ENCODE measurements at regions of chr15 and their contacts with region 1.

Region 1: GRCh38 chr15:29348336-29348914 is 78.8 kb upstream of the NSMCE3 start:
- DNase-seq: peak; percentile 37
- ATAC-seq: peak in 1 of 2 donors; percentile 72

Region 2: DNA sequence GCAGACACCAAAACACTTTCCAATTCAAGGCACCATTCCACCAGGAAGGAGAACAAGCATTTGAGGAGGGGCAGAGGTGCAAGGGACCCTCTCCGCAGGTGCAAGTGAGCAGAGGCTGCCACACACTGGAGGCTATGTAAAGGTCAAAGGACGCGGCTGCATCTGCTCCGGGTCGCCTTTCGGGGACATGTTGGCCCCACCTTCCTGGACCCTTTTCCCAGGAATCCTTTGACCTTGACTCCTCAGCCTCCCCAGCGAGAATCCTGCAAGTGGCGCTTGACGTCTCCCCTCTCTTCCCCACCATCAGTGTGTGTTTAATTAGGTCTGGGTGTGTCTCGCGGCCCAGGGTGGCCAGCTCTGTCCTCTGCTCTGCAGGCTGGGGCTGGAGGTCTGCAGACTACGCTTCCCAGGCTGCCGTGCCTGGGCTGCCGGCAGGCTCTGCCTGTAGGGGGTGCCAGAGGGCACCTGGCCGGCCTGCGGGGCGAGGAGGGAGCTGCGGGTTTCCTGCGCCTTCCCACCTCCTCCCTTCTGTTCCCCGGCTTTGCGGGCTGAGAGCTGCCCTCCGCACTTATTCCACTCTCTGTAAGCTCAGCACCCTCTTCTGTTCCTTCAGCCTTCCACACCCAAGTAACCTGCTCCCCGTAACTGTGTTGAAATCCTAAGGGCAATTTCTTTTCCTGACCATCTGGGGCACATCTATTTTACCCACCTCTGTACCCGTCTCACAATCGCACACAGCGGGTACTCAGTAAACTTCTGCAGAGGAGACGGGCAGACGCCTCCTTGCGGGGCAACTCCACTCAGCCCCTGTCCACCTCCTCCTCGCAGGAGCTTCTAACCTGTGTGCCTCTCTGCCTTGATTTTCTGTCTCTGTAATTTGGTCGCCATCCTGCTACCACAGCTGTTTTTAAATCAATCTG is 208.6 kb before region 1 on chr15:
- intact Hi-C with region 1: loop called in 1 of 2 experiments (anchors 10 kb)
- DNase-seq: peak; percentile 43
- ATAC-seq: peak; percentile 78 to 84

Region 3: GRCh38 chr15:29390051-29390450 is 41.6 kb after region 1 on chr15:
- intact Hi-C with region 1: loop called in 1 of 2 experiments (anchors 10 kb)
- DNase-seq: no peak
- ATAC-seq: no peak